ENCODE measurements at regions of chr1 and their contacts with region 1.

Region 1: GRCh38 chr1:92994105-92994712 is 32.9 kb upstream of the DIPK1A start:
- DNase-seq: peak; percentile 74
- H3K4me3 ChIP-seq: no peak overlapping the region
- H3K27ac ChIP-seq: no peak overlapping the region
- H3K27me3 ChIP-seq: peaks cover 12% of the 10 kb centered on the region
- CTCF ChIP-seq: peak; percentile 79

Region 2: DNA sequence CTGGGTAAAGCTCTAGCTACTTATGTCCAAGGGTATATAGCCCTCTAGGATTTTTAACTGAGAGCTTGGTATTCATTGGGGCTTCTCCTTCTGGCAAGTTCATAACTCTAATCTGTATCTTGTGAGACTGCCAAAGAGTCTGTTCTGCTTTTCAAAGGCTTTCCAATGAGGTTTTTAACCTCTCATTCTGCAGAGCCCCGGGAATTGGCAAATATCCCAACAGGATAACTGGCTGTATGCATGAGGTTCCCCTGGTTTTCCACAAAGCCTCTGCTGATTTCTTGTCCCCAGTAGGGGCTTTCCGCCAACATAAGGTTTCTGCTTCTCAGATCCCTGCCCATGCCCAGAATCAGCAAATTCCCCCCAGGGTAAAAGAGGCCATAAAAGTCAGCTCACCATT is 121.5 kb before region 1 on chr1:
- CTCF ChIA-PET with region 1: interaction called, 28 read pairs
- POLR2A ChIA-PET with region 1: no interaction called
- DNase-seq: no peak
- H3K4me3 ChIP-seq: no peak overlapping the region
- H3K27ac ChIP-seq: no peak overlapping the region
- H3K27me3 ChIP-seq: no peaks in the 10 kb centered on the region
- CTCF ChIP-seq: no peak

Region 3: GRCh38 chr1:92882819-92883218 is 111.4 kb before region 1 on chr1:
- CTCF ChIA-PET with region 1: interaction called, 28 read pairs
- POLR2A ChIA-PET with region 1: no interaction called
- DNase-seq: no peak
- H3K4me3 ChIP-seq: no peak overlapping the region
- H3K27ac ChIP-seq: no peak overlapping the region
- H3K27me3 ChIP-seq: no peaks in the 10 kb centered on the region
- CTCF ChIP-seq: no peak

Region 4: GRCh38 chr1:92960395-92961130 is 33.6 kb before region 1 on chr1:
- CTCF ChIA-PET with region 1: interaction called, 39 read pairs
- POLR2A ChIA-PET with region 1: interaction called, 7 read pairs
- DNase-seq: peak; percentile 42
- H3K4me3 ChIP-seq: peak overlapping the region; percentile 80
- H3K27ac ChIP-seq: peak overlapping the region; percentile 61
- H3K27me3 ChIP-seq: peaks cover 3% of the 10 kb centered on the region
- CTCF ChIP-seq: peak; percentile 66

Region 5: GRCh38 chr1:92975551-92976232 is 18.5 kb before region 1 on chr1:
- CTCF ChIA-PET with region 1: interaction called, 51 read pairs
- POLR2A ChIA-PET with region 1: no interaction called
- DNase-seq: no peak
- H3K4me3 ChIP-seq: no peak overlapping the region
- H3K27ac ChIP-seq: no peak overlapping the region
- H3K27me3 ChIP-seq: peaks cover 9% of the 10 kb centered on the region
- CTCF ChIP-seq: no peak

Region 6: DNA sequence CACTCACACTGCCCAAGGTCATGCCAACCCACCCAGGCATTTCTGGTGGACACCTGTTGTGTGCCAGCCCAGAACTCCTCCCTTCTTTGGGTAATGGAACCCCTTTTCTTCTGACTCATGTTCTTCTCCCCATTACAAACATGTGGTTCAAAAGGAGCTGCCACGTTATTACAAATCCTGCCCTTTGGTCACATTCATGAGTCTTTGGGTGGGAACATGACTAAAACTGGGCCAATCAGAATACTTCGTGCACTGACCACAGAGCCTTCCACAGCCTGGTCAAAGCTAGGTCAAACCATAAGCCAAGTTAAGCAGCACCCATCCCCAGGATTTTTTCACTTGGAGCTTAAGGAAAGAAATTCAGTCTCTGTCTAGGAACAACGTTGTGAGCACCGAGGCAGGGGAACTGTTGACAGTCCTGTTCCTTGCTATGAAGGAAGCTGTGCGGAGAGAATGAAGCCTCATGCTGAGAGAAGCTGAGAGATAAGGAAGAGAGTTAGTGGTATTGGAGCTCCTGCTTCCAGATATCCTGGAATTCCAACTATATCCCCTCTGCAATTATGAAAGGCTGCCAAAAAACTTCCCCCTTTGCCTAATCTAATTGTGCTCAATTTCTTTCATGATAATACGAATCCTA is 13.8 kb after region 1 on chr1:
- CTCF ChIA-PET with region 1: interaction called, 57 read pairs
- POLR2A ChIA-PET with region 1: no interaction called
- DNase-seq: no peak
- H3K4me3 ChIP-seq: no peak overlapping the region
- H3K27ac ChIP-seq: no peak overlapping the region
- H3K27me3 ChIP-seq: peaks cover 6% of the 10 kb centered on the region
- CTCF ChIP-seq: no peak

Region 7: DNA sequence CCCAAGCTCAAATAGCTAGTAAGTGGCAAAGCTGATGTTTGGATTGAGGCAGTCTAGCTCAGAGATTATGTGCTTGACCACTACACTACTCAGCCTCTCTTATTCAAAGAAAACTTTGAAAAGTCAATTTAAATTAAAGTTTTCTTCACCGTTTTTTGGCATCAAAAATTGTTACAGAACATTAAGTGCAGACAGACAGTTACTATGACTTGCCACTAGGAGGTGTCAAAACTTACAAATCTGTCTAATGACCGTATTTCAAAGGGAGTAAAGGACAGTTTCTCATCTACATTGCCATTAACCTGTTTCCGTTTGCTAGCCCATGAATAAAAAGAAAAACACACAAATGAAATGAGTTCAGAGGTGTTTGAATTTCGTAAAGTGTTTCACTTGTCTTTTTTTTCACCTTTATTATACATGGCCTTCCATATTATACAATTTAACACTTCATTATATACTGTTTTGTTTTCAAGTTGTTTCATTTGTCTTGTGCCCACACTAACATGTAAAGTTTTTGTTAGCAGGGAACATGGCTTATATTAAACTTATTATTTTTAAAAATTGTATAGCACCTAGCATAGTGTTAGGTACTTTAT is 27.4 kb after region 1 on chr1:
- CTCF ChIA-PET with region 1: interaction called, 12 read pairs
- POLR2A ChIA-PET with region 1: no interaction called
- DNase-seq: no peak
- H3K4me3 ChIP-seq: no peak overlapping the region
- H3K27ac ChIP-seq: no peak overlapping the region
- H3K27me3 ChIP-seq: peaks cover 18% of the 10 kb centered on the region
- CTCF ChIP-seq: peak; percentile 82

Measured in AG04450 (cell line).